ENCODE measurements at regions of chr1 and their contacts with region 1.

Region 1: GRCh38 chr1:235275223-235275622 is 52.8 kb downstream of the ARID4B start:
- DNase-seq: peak; percentile 43 to 95 (median 93)
- H3K4me3 ChIP-seq: peak overlapping the region in 1 of 7 experiments; percentile 32
- H3K27ac ChIP-seq: peak overlapping the region in 1 of 2 experiments; percentile 40
- H3K4me1 ChIP-seq: peaks cover 0 to 35% (median 20%) of the 10 kb centered on the region in 4 experiments
- H3K27me3 ChIP-seq: no peaks in the 10 kb centered on the region

Region 2: GRCh38 chr1:235105051-235106043 is 169.9 kb before region 1 on chr1:
- CTCF ChIA-PET with region 1: no interaction called
- POLR2A ChIA-PET with region 1: no interaction called
- DNase-seq: no peak
- H3K4me3 ChIP-seq: no peak overlapping the region
- H3K27ac ChIP-seq: no peak overlapping the region
- H3K4me1 ChIP-seq: peaks cover 0 to 10% (median 9%) of the 10 kb centered on the region in 4 experiments
- H3K27me3 ChIP-seq: no peaks in the 10 kb centered on the region

Region 3: GRCh38 chr1:235259133-235259778 is 16.0 kb before region 1 on chr1:
- CTCF ChIA-PET with region 1: interaction called, 15 read pairs
- POLR2A ChIA-PET with region 1: interaction called, 3 read pairs
- DNase-seq: peak in 1 of 3 donors; percentile 32
- H3K4me3 ChIP-seq: peak overlapping the region in 1 of 7 experiments; percentile 24
- H3K27ac ChIP-seq: peak overlapping the region in 1 of 2 experiments; percentile 29
- H3K4me1 ChIP-seq: peaks cover 2 to 18% (median 13%) of the 10 kb centered on the region in 4 experiments
- H3K27me3 ChIP-seq: no peaks in the 10 kb centered on the region

Region 4: GRCh38 chr1:235339746-235340445 is 64.7 kb after region 1 on chr1:
- CTCF ChIA-PET with region 1: no interaction called
- POLR2A ChIA-PET with region 1: no interaction called
- DNase-seq: no peak
- H3K4me3 ChIP-seq: no peak overlapping the region
- H3K27ac ChIP-seq: no peak overlapping the region
- H3K4me1 ChIP-seq: peaks cover 3 to 14% (median 5%) of the 10 kb centered on the region in 4 experiments
- H3K27me3 ChIP-seq: no peaks in the 10 kb centered on the region

Region 5: GRCh38 chr1:235442788-235443429 is 167.7 kb after region 1 on chr1:
- CTCF ChIA-PET with region 1: no interaction called
- POLR2A ChIA-PET with region 1: no interaction called
- DNase-seq: peak; percentile 29 to 72 (median 68)
- H3K4me3 ChIP-seq: no peak overlapping the region
- H3K27ac ChIP-seq: peak overlapping the region in 1 of 2 experiments; percentile 70
- H3K4me1 ChIP-seq: peaks cover 0 to 4% (median under 1%) of the 10 kb centered on the region in 4 experiments
- H3K27me3 ChIP-seq: no peaks in the 10 kb centered on the region

Measured in common myeloid progenitor, CD34-positive (primary cell).